Naive thymus-derived CD4-positive, alpha-beta T cell (primary cell): ENCODE measurements at regions of chr1 and their contacts with region 1.

Region 1: DNA sequence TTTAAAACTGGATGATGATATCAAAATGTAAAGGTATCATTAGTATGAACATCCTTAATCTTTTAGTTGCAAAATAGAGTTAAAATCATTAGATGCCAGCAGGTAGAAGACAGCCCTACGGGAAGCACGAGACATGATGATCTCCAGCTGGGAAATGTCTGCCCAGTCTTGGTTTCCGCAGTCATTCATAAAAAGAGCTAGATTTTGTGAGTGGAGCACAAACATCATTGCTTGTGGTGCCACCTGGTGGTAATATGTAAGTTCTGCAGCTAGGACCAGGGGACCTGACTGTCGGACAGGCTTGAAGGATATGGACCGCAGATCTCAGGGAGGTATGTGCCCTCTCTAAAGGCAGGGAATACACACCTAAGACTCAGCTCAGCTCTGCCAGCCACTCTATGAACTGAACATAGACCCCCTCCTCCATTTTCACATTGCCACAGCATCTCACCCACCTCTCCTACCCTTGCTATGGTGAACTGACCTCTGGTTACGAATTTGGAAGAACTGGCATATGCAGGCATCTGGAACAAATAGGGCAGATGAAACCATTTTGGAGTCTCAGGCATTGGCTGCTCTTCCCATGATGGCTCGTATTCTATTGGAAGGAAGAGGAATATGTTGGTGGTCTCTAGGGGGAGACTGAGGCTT is 9.2 kb downstream of the FCMR start:
- DNase-seq: peak; percentile 26 to 73 (median 67)
- ATAC-seq: peak; percentile 73
- H3K4me3 ChIP-seq: no peak overlapping the region
- H3K4me3 Mint-ChIP-seq: peak overlapping the region in 3 of 10 donors; percentile 67 to 85 (median 75)
- H3K27ac ChIP-seq: peak overlapping the region; percentile 90
- H3K27ac Mint-ChIP-seq: peak overlapping the region in 4 of 9 donors; percentile 83 to 96 (median 92)
- H3K4me1 ChIP-seq: peaks cover 59 to 93% of the 10 kb centered on the region in 2 donors
- H3K4me1 Mint-ChIP-seq: peaks cover 73 to 94% (median 92%) of the 10 kb centered on the region in 7 donors
- H3K27me3 ChIP-seq: no peaks in the 10 kb centered on the region
- H3K27me3 Mint-ChIP-seq: peaks cover 0 to 6% (median 0%) of the 10 kb centered on the region in 5 donors

Region 2: GRCh38 chr1:206635080-206635977 is 277.2 kb before region 1 on chr1 and contains the start of gene DYRK3:
- CTCF ChIA-PET with region 1: no interaction called
- POLR2A ChIA-PET with region 1: no interaction called
- intact Hi-C with region 1: loop called (anchors 2 to 5 kb)
- DNase-seq: peak; percentile 71 to 98 (median 80)
- ATAC-seq: peak; percentile 97
- H3K4me3 ChIP-seq: peak within 1 kb of the TSS; percentile 67
- H3K4me3 Mint-ChIP-seq: peak within 1 kb of the TSS; percentile 85 to 96 (median 90)
- H3K27ac ChIP-seq: peak within 1 kb of the TSS; percentile 57
- H3K27ac Mint-ChIP-seq: peak within 1 kb of the TSS; percentile 64 to 93 (median 85)
- H3K4me1 ChIP-seq: peaks cover 8 to 16% of the 10 kb centered on the region in 2 donors
- H3K4me1 Mint-ChIP-seq: peaks cover 14 to 29% (median 18%) of the 10 kb centered on the region in 7 donors
- H3K27me3 ChIP-seq: no peaks in the 10 kb centered on the region
- H3K27me3 Mint-ChIP-seq: peaks cover 7 to 13% (median 9%) of the 10 kb centered on the region in 5 donors
- total RNA-seq, gene DYRK3: 0.22 to 8.2 (median 0.69) TPM

Region 3: DNA sequence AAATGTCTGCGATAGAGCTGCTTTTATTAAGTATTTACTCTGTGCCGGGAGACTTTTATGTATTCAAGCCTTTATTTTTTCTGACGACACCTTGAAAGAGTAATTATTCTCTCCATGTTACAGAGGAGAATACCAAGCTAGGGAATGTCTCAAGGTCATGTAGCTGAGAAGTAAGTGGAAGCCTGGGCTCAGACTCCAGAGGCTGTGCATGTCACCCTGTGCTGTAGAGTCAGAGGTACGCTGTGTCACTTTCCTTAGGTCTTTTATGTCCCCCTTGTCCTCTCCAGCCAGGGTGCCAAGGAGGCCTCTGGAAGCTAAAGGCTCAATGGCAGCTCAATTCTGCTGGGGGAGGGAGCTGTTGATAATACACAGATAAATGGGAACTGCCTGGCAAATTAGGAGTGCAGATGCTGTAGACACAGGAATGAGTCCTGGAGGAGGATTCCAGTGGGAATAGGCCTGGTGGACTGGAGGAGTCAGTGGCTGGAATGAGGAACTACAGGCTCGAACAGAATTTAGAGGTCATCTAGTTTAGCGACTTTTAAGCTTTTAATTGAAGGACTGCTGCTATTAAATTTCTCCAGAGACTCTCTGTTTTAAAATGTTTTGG is 151.3 kb before region 1 on chr1:
- CTCF ChIA-PET with region 1: interaction called, 5 read pairs
- POLR2A ChIA-PET with region 1: interaction called, 3 read pairs
- intact Hi-C with region 1: loop called in 1 of 2 experiments (anchors 1 kb)
- DNase-seq: no peak
- ATAC-seq: no peak
- H3K4me3 ChIP-seq: no peak overlapping the region
- H3K4me3 Mint-ChIP-seq: peak overlapping the region in 1 of 10 donors; percentile 30
- H3K27ac ChIP-seq: no peak overlapping the region
- H3K27ac Mint-ChIP-seq: peak overlapping the region in 2 of 9 donors; percentile 29 to 47
- H3K4me1 ChIP-seq: peaks cover 45 to 52% of the 10 kb centered on the region in 2 donors
- H3K4me1 Mint-ChIP-seq: peaks cover 19 to 50% (median 42%) of the 10 kb centered on the region in 7 donors
- H3K27me3 ChIP-seq: no peaks in the 10 kb centered on the region
- H3K27me3 Mint-ChIP-seq: peaks cover 0 to 42% (median 0%) of the 10 kb centered on the region in 5 donors

Region 4: DNA sequence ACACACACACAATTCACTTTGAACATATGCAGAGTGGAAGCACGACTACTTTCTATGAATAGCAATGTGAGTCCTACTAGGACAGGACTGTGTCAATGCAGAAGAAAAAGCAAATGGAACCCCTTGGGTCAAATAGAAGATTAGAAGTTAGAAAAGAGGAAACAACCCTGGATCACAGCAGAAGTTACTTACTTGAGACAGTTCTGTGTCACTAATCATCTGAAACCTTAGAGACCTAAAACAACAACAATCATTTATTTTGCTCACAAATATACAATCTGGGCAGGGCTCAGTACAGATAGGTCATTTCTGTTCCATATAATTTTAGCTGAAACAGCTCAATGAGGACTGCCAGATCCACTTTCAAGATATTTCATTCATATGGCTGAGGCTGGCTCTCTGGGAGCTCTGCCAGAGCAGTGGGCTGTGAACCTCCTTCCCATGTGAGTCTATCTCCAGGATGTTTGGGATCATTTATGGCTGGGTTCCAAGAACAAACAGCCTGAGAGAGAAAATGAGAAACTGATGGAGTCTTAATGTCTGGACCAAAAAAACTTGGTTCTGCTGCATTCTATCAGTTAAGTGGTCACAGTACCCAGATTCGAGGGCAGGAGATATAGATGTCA is 97.7 kb before region 1 on chr1:
- CTCF ChIA-PET with region 1: interaction called, 65 read pairs
- POLR2A ChIA-PET with region 1: interaction called, 14 read pairs
- intact Hi-C with region 1: no loop called
- DNase-seq: no peak
- ATAC-seq: peak; percentile 38
- H3K4me3 ChIP-seq: no peak overlapping the region
- H3K4me3 Mint-ChIP-seq: no peak overlapping the region
- H3K27ac ChIP-seq: no peak overlapping the region
- H3K27ac Mint-ChIP-seq: peak overlapping the region in 7 of 9 donors; percentile 8 to 97 (median 41)
- H3K4me1 ChIP-seq: peaks cover 0 to 14% of the 10 kb centered on the region in 2 donors
- H3K4me1 Mint-ChIP-seq: peaks cover 20 to 53% (median 44%) of the 10 kb centered on the region in 7 donors
- H3K27me3 ChIP-seq: no peaks in the 10 kb centered on the region
- H3K27me3 Mint-ChIP-seq: no peaks in the 10 kb centered on the region

Region 5: DNA sequence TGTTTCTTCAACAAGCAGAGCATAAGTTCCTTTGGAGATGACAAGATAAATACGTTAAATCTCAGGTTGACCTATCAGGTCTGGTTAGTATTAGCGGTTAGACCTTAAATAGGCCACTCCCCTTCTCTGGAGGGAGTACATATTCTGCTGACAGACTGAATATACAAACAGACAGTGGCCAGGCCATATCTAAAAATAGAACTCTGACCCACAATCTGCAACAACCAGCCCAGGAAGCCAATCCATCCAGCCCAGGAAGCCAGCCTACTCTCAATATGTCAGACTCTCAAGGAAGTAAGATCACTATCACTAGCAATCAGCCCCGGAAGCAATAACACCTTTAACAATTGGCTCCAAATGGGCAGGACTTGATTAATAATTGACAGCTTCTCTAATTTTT is 40.4 kb before region 1 on chr1:
- CTCF ChIA-PET with region 1: interaction called, 16 read pairs
- POLR2A ChIA-PET with region 1: interaction called, 6 read pairs
- intact Hi-C with region 1: no loop called
- DNase-seq: no peak
- ATAC-seq: no peak
- H3K4me3 ChIP-seq: no peak overlapping the region
- H3K4me3 Mint-ChIP-seq: no peak overlapping the region
- H3K27ac ChIP-seq: no peak overlapping the region
- H3K27ac Mint-ChIP-seq: no peak overlapping the region
- H3K4me1 ChIP-seq: no peaks in the 10 kb centered on the region
- H3K4me1 Mint-ChIP-seq: peaks cover 0 to 7% (median 0%) of the 10 kb centered on the region in 7 donors
- H3K27me3 ChIP-seq: peaks cover 0 to 2% of the 10 kb centered on the region in 2 donors
- H3K27me3 Mint-ChIP-seq: peaks cover 0 to 23% (median 0%) of the 10 kb centered on the region in 5 donors